Gastrocnemius medialis (tissue), 4 donors: ENCODE measurements at regions of chr10 and their contacts with region 1.

Region 1: GRCh38 chr10:31490858-31491504 is 172.0 kb downstream of the ZEB1 start:
- DNase-seq: no peak
- ATAC-seq: peak; percentile 73 to 83
- H3K4me3 ChIP-seq: no peak overlapping the region
- H3K27ac ChIP-seq: peak overlapping the region in 1 of 4 donors; percentile 7
- H3K4me1 ChIP-seq: no peaks in the 10 kb centered on the region
- H3K27me3 ChIP-seq: no peaks in the 10 kb centered on the region
- CTCF ChIP-seq: peak; percentile 50 to 66 (median 60)
- POLR2A ChIP-seq: no peak

Region 2: GRCh38 chr10:30722956-30723620 is 767.9 kb before region 1 on chr10:
- in situ Hi-C with region 1: loop called in 1 of 4 experiments (anchors 25 kb)
- intact Hi-C with region 1: loop called (anchors 5 kb)
- DNase-seq: no peak
- ATAC-seq: no peak
- H3K4me3 ChIP-seq: no peak overlapping the region
- H3K27ac ChIP-seq: no peak overlapping the region
- H3K4me1 ChIP-seq: no peaks in the 10 kb centered on the region
- H3K27me3 ChIP-seq: no peaks in the 10 kb centered on the region
- CTCF ChIP-seq: no peak
- POLR2A ChIP-seq: no peak

Region 3: GRCh38 chr10:30736685-30737232 is 754.2 kb before region 1 on chr10:
- in situ Hi-C with region 1: loop called in 1 of 4 experiments (anchors 25 kb)
- intact Hi-C with region 1: no loop called
- DNase-seq: peak; percentile 23 to 52
- ATAC-seq: peak; percentile 92 to 93
- H3K4me3 ChIP-seq: no peak overlapping the region
- H3K27ac ChIP-seq: no peak overlapping the region
- H3K4me1 ChIP-seq: peaks cover 2 to 8% of the 10 kb centered on the region in 2 donors
- H3K27me3 ChIP-seq: no peaks in the 10 kb centered on the region
- CTCF ChIP-seq: no peak
- POLR2A ChIP-seq: no peak

Region 4: GRCh38 chr10:31064348-31064747 is 426.6 kb before region 1 on chr10:
- in situ Hi-C with region 1: loop called in 1 of 4 experiments (anchors 25 kb)
- intact Hi-C with region 1: no loop called
- DNase-seq: peak; percentile 35 to 41
- ATAC-seq: peak; percentile 76 to 90
- H3K4me3 ChIP-seq: no peak overlapping the region
- H3K27ac ChIP-seq: peak overlapping the region; percentile 4 to 63 (median 58)
- H3K4me1 ChIP-seq: peaks cover 0 to 7% of the 10 kb centered on the region in 2 donors
- H3K27me3 ChIP-seq: no peaks in the 10 kb centered on the region
- CTCF ChIP-seq: no peak
- POLR2A ChIP-seq: no peak